T-cell (primary cell): ENCODE measurements at regions of chr4 and their contacts with region 1.

Region 1: DNA sequence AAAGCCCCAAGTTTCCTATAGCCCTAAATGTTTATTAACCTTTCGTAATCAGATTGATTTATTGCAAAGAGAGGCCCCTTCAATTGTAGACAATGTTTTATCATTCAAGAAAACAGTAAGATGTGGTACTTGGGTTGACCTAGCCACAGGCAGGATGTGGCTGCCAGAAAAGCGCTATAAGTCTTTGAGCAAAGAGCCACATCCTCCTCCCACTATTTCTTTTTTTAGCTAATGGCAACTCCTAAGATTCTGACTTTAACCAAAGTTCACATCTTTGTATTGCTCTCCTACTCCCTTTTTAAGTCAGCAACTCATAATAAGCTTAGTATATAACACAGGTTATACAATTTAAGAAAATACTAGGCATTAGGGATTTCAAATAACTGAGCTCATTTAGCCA is 70.7 kb upstream of the PPP3CA start:
- DNase-seq: peak in 34 of 35 experiments; percentile 22 to 72 (median 53)
- ATAC-seq: peak; percentile 85 to 97 (median 96)
- H3K4me3 ChIP-seq: no peak overlapping the region
- H3K4me3 Mint-ChIP-seq: peak overlapping the region in 2 of 3 donors; percentile 45 to 60
- H3K27ac ChIP-seq: no peak overlapping the region
- H3K27ac Mint-ChIP-seq: no peak overlapping the region
- H3K4me1 ChIP-seq: peaks cover 25 to 36% of the 10 kb centered on the region in 2 experiments
- H3K4me1 Mint-ChIP-seq: peaks cover 43 to 49% (median 46%) of the 10 kb centered on the region in 3 donors
- H3K27me3 ChIP-seq: peaks cover 0 to 24% of the 10 kb centered on the region in 2 experiments
- H3K27me3 Mint-ChIP-seq: peaks cover 27 to 39% of the 10 kb centered on the region in 2 donors

Region 2: DNA sequence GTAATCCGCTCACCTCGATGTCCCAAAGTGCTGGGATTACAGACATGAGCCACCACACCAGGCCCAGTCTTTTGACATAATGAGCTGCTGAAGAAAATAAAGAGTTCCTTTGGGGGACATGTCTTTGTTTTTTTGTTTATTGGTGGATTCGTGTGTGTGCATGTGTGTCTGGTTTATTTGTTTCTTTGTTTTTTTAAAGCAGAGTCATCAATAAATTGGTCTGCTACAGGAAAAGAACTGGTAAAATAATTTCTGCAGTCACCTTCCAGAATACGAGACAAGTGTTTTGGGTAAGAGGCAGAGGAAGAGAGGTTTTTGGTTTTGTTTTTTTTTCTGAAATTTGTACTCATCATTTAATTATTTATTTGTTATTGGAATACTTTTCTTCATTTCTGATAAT is 19.2 kb before region 1 on chr4:
- CTCF ChIA-PET with region 1: interaction called in 1 of 2 experiments, 3 read pairs
- POLR2A ChIA-PET with region 1: interaction called in 1 of 2 experiments, 12 read pairs
- DNase-seq: no peak
- ATAC-seq: no peak
- H3K4me3 ChIP-seq: no peak overlapping the region
- H3K4me3 Mint-ChIP-seq: no peak overlapping the region
- H3K27ac ChIP-seq: no peak overlapping the region
- H3K27ac Mint-ChIP-seq: no peak overlapping the region
- H3K4me1 ChIP-seq: no peaks in the 10 kb centered on the region
- H3K4me1 Mint-ChIP-seq: peaks cover 0 to 6% (median 0%) of the 10 kb centered on the region in 3 donors
- H3K27me3 ChIP-seq: no peaks in the 10 kb centered on the region
- H3K27me3 Mint-ChIP-seq: peaks cover 7 to 16% of the 10 kb centered on the region in 2 donors